ENCODE measurements at regions of chr17 and their contacts with region 1.

Region 1: DNA sequence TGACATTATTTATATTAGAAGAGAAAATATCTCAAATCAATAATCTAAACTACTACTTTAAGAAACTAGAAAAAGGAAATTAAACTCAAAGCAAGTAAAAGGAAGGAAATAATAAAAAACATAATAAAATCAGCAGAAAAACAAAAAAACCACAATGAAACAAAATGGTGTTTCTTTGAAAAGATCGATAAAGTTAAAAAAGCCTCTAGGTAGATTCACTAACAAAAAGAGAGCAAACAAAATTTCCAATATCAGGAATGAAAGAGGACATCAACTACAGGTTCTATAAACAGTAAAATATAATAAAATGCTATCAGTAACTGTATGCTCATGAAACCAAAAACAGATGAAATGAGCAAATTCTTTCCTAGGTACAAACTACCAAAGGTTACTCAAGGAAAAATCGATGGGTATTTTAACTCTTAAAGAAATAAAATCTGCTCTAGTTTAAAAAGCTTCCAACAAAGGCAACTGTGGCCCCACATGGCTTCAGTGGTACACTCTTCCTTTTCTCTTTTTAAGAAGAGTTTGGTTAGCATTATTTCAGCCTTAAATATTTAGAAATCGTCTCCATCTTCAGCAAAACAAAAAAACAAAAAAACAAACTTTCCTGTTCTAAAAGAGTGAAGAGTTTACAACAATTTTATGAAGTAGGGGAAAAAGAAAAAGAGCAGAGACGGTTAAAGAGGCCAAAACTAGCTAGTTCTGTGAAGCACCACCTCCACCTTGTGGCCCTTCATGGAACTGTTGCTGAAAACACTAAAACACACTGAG is 102.2 kb downstream of the TRIM37 start:
- DNase-seq: peak; percentile 83
- H3K4me3 ChIP-seq: no peak overlapping the region
- H3K27ac ChIP-seq: peak overlapping the region in 1 of 2 donors; percentile 7
- H3K4me1 ChIP-seq: peaks cover 8% of the 10 kb centered on the region
- H3K27me3 ChIP-seq: no peaks in the 10 kb centered on the region
- CTCF ChIP-seq: peak; percentile 88 to 95 (median 93)
- POLR2A ChIP-seq: no peak

Region 2: GRCh38 chr17:58587702-58588254 is 416.7 kb before region 1 on chr17:
- intact Hi-C with region 1: loop called (anchors 10 kb)
- DNase-seq: peak; percentile 53
- H3K4me3 ChIP-seq: no peak overlapping the region
- H3K27ac ChIP-seq: no peak overlapping the region
- H3K4me1 ChIP-seq: no peaks in the 10 kb centered on the region
- H3K27me3 ChIP-seq: no peaks in the 10 kb centered on the region
- CTCF ChIP-seq: peak; percentile 46 to 83 (median 59)
- POLR2A ChIP-seq: no peak

Region 3: GRCh38 chr17:58932964-58933363 is 71.6 kb before region 1 on chr17:
- intact Hi-C with region 1: no loop called
- DNase-seq: no peak
- H3K4me3 ChIP-seq: no peak overlapping the region
- H3K27ac ChIP-seq: no peak overlapping the region
- H3K4me1 ChIP-seq: no peaks in the 10 kb centered on the region
- H3K27me3 ChIP-seq: no peaks in the 10 kb centered on the region
- CTCF ChIP-seq: no peak
- POLR2A ChIP-seq: no peak

Region 4: DNA sequence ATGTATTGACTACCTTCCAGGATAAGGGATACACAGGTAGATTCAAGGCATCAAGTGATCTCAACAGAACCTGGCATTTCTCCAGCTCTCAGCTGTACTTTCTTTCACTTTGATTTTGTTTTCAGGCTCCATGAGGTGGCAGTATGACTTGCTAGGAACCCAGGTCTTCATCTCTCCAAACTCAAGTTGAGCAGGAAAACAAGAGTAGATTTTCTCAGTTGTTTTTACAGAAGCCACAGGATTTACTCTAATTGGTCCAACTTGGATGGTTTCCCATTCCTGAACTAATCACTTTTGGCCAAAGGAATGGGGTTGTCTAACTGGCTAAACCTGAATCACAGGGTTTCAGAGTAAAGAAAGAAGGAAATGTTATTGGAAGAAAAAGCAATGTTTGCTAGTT is 44.5 kb before region 1 on chr17:
- intact Hi-C with region 1: no loop called
- DNase-seq: peak; percentile 20
- H3K4me3 ChIP-seq: no peak overlapping the region
- H3K27ac ChIP-seq: no peak overlapping the region
- H3K4me1 ChIP-seq: no peaks in the 10 kb centered on the region
- H3K27me3 ChIP-seq: no peaks in the 10 kb centered on the region
- CTCF ChIP-seq: no peak
- POLR2A ChIP-seq: no peak

Region 5: DNA sequence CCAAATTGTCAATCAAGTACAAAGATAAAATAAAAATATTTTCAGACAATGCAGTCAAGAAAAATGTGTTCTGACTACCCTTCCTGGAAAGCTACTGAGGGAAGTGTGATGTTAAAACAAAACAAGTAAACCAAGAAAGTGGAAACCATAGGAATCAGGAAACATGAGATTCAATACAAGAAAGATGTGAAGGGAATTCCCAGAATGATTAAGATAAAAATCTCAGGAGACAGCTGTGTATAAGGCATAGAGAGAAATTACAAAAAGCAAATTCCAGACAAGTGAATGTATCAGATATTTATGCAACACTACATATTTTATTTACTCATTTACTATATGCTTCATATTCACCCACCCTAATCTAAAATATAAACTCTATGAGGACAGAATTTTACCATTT is 70.0 kb after region 1 on chr17:
- intact Hi-C with region 1: no loop called
- DNase-seq: no peak
- H3K4me3 ChIP-seq: no peak overlapping the region
- H3K27ac ChIP-seq: no peak overlapping the region
- H3K4me1 ChIP-seq: no peaks in the 10 kb centered on the region
- H3K27me3 ChIP-seq: no peaks in the 10 kb centered on the region
- CTCF ChIP-seq: no peak
- POLR2A ChIP-seq: no peak

Measured in testis (tissue), 5 donors.